SK-N-SH (cell line): ENCODE measurements at regions of chr14 and their contacts with region 1.

Region 1: DNA sequence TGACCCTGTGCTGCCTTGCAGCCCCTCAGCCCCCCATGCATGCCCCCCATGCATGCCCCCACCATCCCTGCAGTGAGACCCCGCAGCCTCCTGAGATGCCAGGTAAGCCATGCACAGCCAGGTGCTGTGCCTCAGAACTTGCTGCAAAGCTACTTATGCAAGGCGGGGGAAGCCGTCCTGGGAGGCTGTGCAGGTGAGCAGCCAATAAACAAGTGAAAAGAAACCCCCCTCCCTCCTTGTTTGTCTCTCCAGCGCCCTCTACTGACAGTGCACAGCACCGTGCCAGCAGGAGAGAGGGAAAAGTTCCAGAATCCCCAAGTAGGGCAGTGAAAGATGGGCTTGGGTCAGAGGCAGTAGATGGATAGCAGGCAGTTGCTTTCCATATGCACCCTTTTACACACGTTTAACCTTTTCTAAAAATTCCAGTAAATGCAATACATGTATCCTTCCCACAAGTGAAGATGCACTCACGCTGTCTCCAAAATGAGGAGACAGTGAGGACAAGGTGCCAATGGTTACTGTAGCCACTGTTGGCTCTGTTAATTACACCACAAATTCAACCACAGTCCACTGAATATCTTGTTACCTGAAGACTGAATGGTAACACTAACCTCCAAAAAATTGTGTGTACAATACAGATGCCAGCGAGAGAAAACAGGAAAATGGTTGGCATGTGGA is 18.0 kb downstream of the TNFAIP2 start:
- DNase-seq: peak; percentile 63
- H3K4me3 ChIP-seq: no peak overlapping the region
- H3K27ac ChIP-seq: no peak overlapping the region
- H3K4me1 ChIP-seq: peaks cover 12 to 14% of the 10 kb centered on the region in 2 experiments
- H3K27me3 ChIP-seq: no peaks in the 10 kb centered on the region
- CTCF ChIP-seq: peak; percentile 73
- EP300 ChIP-seq: no peak
- RAD21 ChIP-seq: peak; percentile 52

Region 2: DNA sequence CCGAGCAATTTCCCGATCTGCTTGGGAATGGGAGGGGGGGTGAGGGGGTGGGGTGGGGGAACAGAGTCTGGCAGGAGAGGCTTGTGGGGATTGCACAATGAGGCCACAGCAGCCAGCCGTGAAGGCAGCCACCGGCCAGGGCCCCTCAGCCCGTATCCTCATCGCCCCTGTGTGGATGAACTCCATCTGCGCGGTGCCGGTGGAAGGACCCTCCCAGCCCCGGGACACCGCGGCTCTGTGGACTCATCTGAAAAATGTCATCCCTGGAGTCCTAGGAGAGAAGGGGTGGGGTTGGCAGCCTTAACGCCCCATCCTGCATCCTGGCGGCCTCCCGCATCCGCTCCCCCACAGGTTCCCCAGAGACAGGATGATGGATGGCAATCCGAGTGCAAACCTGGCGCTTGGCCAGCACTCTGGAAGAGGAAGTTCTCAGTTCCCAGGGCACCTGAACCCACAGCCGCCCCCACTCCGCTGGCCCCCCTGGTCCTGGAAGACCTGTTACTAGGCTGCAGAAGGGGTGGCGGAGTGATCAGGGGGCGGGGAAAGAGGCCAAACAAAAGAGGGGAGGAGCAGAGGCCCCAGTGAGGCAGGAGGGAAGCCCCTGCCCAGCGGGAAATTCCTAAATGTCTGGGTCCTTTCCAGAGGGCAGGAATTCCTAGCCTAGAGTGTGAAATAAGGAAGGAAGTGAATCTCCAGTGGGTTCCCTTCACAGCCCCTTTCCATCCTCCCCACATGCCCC is 19.2 kb before region 1 on chr14:
- CTCF ChIA-PET with region 1: interaction called, 19 read pairs
- POLR2A ChIA-PET with region 1: no interaction called
- DNase-seq: peak; percentile 86
- H3K4me3 ChIP-seq: 0 out of 4 replicates have a peak overlapping the region, but pooled peaks of 1 of the 2 experiments have one; percentile 9
- H3K27ac ChIP-seq: peak overlapping the region; percentile 27 to 69; a peak in 3 of 4 replicates
- H3K4me1 ChIP-seq: peaks cover 11 to 24% of the 10 kb centered on the region in 2 experiments
- H3K27me3 ChIP-seq: no peaks in the 10 kb centered on the region
- CTCF ChIP-seq: no peak
- EP300 ChIP-seq: peak in 1 of 2 experiments; percentile 75; a peak in 1 of 4 replicates
- RAD21 ChIP-seq: 0 out of 2 replicates have a peak, but pooled peaks have one; percentile 11

Region 3: DNA sequence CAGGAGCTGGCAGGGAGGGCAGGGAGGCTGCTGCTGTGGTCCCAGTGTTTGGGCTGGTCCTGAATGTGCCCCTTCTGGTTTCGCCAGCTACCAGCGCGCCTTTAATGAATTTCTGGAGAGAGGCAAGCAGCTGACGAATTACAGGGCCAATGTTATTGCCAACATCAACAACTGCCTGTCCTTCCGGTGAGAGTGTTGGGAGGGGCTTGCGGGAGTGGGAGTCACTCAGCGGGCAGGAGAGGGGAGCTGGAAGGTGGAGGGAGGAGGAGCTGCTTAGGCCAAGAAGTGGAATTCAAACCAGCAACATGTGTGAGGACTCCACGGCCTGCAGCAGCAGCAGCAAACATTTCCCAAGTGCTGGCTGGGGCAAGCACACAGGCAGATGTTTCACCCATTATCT is 10.3 kb before region 1 on chr14:
- CTCF ChIA-PET with region 1: interaction called, 22 read pairs
- POLR2A ChIA-PET with region 1: no interaction called
- DNase-seq: peak; percentile 87
- H3K4me3 ChIP-seq: peak overlapping the region; percentile 17 to 44; a peak in 3 of 4 replicates
- H3K27ac ChIP-seq: peak overlapping the region; percentile 69 to 79
- H3K4me1 ChIP-seq: peaks cover 32 to 51% of the 10 kb centered on the region in 2 experiments; a peak in 3 of 4 replicates
- H3K27me3 ChIP-seq: no peaks in the 10 kb centered on the region
- CTCF ChIP-seq: no peak
- EP300 ChIP-seq: peak; percentile 22 to 36; a peak in 1 of 4 replicates
- RAD21 ChIP-seq: no peak